ENCODE measurements at regions of chr17 and their contacts with region 1.

Region 1: DNA sequence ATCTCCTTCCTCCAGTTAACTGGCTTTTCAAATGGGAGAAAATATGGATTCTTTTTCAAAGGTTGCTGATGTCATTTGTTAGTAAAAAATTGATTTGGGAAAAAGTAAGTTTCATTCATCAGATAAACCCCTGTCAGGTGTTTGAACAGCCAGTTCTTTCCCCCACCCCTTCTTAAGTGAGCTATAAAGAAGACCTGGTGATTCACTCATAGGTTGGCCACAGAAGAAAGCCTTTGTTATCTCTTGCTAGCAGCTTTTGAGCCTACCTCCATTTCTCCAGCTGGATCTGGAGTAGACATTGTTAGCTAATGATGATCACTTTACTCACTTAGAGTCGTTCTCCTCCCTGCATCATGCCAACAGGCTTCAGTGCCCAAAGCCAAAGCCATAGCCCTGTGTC is 63.0 kb downstream of the NLK start:
- DNase-seq: no peak
- ATAC-seq: no peak
- H3K4me3 ChIP-seq: no peak overlapping the region
- H3K27ac ChIP-seq: no peak overlapping the region
- H3K4me1 ChIP-seq: peaks cover 14% of the 10 kb centered on the region
- H3K27me3 ChIP-seq: no peaks in the 10 kb centered on the region
- CTCF ChIP-seq: no peak
- EP300 ChIP-seq: no peak
- POLR2A ChIP-seq: no peak
- RAD21 ChIP-seq: no peak

Region 2: DNA sequence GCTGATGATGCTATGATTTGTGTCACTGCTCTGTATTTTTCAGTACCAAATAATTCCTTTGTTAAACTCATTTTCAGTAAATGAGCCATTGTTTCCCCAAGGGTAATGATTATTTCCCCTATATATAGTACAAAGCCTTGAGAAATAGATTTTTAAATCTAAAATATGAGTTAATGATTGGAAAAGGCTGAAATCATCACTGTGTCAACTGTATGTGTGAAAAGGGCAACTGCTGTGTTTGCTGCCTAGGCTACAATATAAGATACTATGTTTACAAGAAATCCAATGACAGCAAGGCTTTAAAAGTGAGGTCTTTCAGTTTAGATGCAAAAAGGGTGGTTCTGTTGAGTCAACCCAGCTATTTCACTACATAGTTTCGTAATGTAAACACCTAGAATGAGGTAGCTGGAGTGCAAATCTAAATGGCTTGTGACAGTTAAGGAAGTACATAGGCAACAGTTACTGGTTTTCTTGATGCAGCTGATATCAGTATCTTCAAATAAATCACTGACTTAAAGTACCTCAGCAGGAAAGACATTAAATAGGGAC is 47.7 kb before region 1 on chr17:
- CTCF ChIA-PET with region 1: no interaction called
- POLR2A ChIA-PET with region 1: no interaction called
- in situ Hi-C with region 1: no loop called
- intact Hi-C with region 1: loop called (anchors 10 kb)
- DNase-seq: peak; percentile 49
- ATAC-seq: peak; percentile 59
- H3K4me3 ChIP-seq: no peak overlapping the region
- H3K27ac ChIP-seq: no peak overlapping the region
- H3K4me1 ChIP-seq: peaks cover 44% of the 10 kb centered on the region
- H3K27me3 ChIP-seq: no peaks in the 10 kb centered on the region
- CTCF ChIP-seq: no peak
- EP300 ChIP-seq: no peak
- POLR2A ChIP-seq: no peak
- RAD21 ChIP-seq: no peak

Measured in HepG2 (cell line).